ENCODE measurements at regions of chr9 and their contacts with region 1.

Region 1: DNA sequence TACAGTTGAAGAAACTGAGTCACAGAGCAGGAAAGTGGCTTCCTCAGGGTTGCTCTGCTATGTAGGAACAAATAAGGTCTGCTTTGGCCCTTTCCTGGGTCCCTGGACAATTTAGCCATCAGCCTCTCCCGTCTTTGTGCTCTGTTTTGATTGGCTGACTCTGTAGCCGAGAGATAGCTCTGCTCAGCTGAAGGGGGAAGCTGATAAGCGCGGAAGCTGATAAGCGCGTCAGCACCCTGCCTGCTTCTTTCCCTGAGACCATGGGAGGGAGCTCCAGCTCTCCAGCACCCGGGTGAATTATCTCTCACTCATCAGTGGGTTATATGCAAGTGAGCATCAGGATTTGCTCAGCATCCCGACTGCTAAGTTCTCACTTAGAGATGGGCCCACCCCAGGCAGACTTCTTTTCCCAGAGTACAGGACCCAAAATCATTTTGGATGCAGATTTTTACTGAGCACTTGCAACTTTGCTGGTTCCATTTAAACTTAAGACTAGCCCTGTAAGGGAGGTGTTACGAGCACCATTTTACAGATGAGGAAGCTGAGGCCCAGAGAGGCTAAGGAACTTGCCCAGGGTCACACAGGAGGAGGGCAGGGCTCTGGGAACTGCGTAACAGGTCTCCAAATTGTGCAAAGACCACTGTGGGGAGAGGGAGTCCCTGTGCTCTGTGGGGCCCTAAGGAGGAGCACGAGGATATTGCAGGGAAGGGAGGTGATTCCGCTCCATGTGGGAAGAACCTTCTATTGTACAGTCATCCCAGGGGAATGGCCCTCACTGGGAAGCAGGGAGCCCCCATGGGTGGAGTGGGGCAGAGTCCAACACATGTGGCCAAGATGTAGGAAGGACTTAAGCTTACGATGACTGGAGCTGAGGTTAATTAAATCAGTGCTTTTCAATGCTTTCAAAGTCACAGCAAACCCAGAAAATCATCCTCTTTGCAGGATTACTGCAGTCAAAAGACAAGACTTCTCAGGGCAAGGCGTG is 83.7 kb upstream of the ORM1 start:
- DNase-seq: peak in 1 of 2 donors; percentile 66
- ATAC-seq: peak; percentile 52 to 85 (median 68)
- H3K4me3 ChIP-seq: no peak overlapping the region
- H3K27ac ChIP-seq: peak overlapping the region in 7 of 10 donors; percentile 39 to 77 (median 63)
- H3K4me1 ChIP-seq: peaks cover 8 to 54% (median 24%) of the 10 kb centered on the region in 9 donors
- H3K27me3 ChIP-seq: no peaks in the 10 kb centered on the region
- CTCF ChIP-seq: peak in 7 of 9 donors; percentile 28 to 63 (median 40)

Region 2: GRCh38 chr9:114180696-114181606 is 58.2 kb before region 1 on chr9:
- intact Hi-C with region 1: loop called in 2 of 10 experiments (anchors 5 to 10 kb)
- DNase-seq: peak in 1 of 2 donors; percentile 47
- ATAC-seq: peak; percentile 19 to 50 (median 38)
- H3K4me3 ChIP-seq: no peak overlapping the region
- H3K27ac ChIP-seq: peak overlapping the region in 9 of 10 donors; percentile 53 to 91 (median 69)
- H3K4me1 ChIP-seq: peaks cover 16 to 84% (median 61%) of the 10 kb centered on the region in 9 donors
- H3K27me3 ChIP-seq: no peaks in the 10 kb centered on the region
- CTCF ChIP-seq: no peak

Region 3: GRCh38 chr9:114205171-114206015 is 33.8 kb before region 1 on chr9:
- intact Hi-C with region 1: no loop called
- DNase-seq: peak in 1 of 2 donors; percentile 23
- ATAC-seq: peak in 5 of 8 donors; percentile 17 to 32 (median 26)
- H3K4me3 ChIP-seq: no peak overlapping the region
- H3K27ac ChIP-seq: peak overlapping the region in 8 of 10 donors; percentile 17 to 90 (median 82)
- H3K4me1 ChIP-seq: peaks cover 16 to 46% (median 35%) of the 10 kb centered on the region in 9 donors
- H3K27me3 ChIP-seq: no peaks in the 10 kb centered on the region
- CTCF ChIP-seq: no peak

Measured in heart right ventricle (tissue), 16 donors.